WTC11 (cell line): ENCODE measurements at regions of chr1 and their contacts with region 1.

Region 1: DNA sequence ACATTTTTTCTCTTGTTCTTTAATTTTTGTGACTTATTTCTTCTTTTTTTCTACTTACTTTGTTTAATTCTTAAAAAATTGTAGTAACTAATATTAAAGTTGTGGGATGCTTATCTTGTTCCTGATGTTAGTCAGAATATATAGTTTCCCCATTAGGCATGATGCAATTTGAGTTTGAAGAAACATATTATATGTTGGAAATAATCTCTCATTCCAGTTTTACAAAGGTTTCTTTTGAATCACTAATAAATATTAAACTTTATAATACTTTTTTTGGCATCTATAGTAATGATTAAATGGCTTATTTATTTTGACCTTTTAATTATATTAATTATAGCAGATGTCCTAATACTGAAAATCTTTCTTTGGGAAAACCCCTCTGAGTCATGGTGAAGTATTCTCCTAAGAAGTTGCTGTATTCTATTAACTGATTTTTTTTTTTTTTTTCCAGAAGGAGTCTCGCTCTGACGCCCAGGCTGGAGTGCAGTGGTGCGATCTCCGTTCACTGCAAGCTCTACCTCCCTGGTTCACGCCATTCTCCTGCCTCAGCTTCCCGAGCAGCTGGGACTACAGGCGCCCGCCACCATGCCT is 28.5 kb upstream of the PTGS2 start:
- DNase-seq: no peak
- ATAC-seq: no peak
- H3K4me3 Mint-ChIP-seq: no peak overlapping the region
- H3K27ac Mint-ChIP-seq: no peak overlapping the region
- H3K4me1 Mint-ChIP-seq: no peaks in the 10 kb centered on the region
- H3K27me3 Mint-ChIP-seq: no peaks in the 10 kb centered on the region
- CTCF ChIP-seq: no peak

Region 2: GRCh38 chr1:186722711-186723309 is 14.1 kb after region 1 on chr1:
- CTCF ChIA-PET with region 1: interaction called, 10 read pairs
- POLR2A ChIA-PET with region 1: no interaction called
- DNase-seq: no peak
- ATAC-seq: peak; percentile 74
- H3K4me3 Mint-ChIP-seq: no peak overlapping the region
- H3K27ac Mint-ChIP-seq: no peak overlapping the region
- H3K4me1 Mint-ChIP-seq: no peaks in the 10 kb centered on the region
- H3K27me3 Mint-ChIP-seq: no peaks in the 10 kb centered on the region
- CTCF ChIP-seq: peak; percentile 60